Natural killer cell (primary cell): ENCODE measurements at regions of chr11 and their contacts with region 1.

Region 1: GRCh38 chr11:59753650-59754493 is 1.3 kb upstream of the STX3 start:
- DNase-seq: peak; percentile 82 to 90
- ATAC-seq: peak; percentile 67 to 83 (median 75)
- H3K4me3 ChIP-seq: peak overlapping the region; percentile 74
- H3K4me3 Mint-ChIP-seq: peak overlapping the region; percentile 96
- H3K27ac ChIP-seq: no peak overlapping the region
- H3K27ac Mint-ChIP-seq: peak overlapping the region; percentile 80 to 84
- H3K4me1 ChIP-seq: peaks cover 27% of the 10 kb centered on the region
- H3K4me1 Mint-ChIP-seq: peaks cover 41 to 47% of the 10 kb centered on the region in 2 donors
- H3K27me3 ChIP-seq: no peaks in the 10 kb centered on the region
- H3K27me3 Mint-ChIP-seq: peaks cover 6 to 9% of the 10 kb centered on the region in 2 donors
- CTCF ChIP-seq: peak; percentile 84

Region 2: GRCh38 chr11:59728913-59729312 is 25.0 kb before region 1 on chr11:
- intact Hi-C with region 1: no loop called
- DNase-seq: peak; percentile 23 to 43
- ATAC-seq: peak; percentile 93 to 99 (median 93)
- H3K4me3 ChIP-seq: no peak overlapping the region
- H3K4me3 Mint-ChIP-seq: no peak overlapping the region
- H3K27ac ChIP-seq: peak overlapping the region; percentile 61
- H3K27ac Mint-ChIP-seq: peak overlapping the region; percentile 84 to 86
- H3K4me1 ChIP-seq: peaks cover 9% of the 10 kb centered on the region
- H3K4me1 Mint-ChIP-seq: peaks cover 18% of the 10 kb centered on the region in 2 donors
- H3K27me3 ChIP-seq: no peaks in the 10 kb centered on the region
- H3K27me3 Mint-ChIP-seq: peaks cover 0 to 3% of the 10 kb centered on the region in 2 donors
- CTCF ChIP-seq: no peak

Region 3: GRCh38 chr11:59802639-59803176 is 48.8 kb after region 1 on chr11:
- intact Hi-C with region 1: loop called (anchors 1 kb)
- DNase-seq: peak in 1 of 2 donors; percentile 83
- ATAC-seq: peak in 2 of 3 donors; percentile 83 to 86
- H3K4me3 ChIP-seq: no peak overlapping the region
- H3K4me3 Mint-ChIP-seq: no peak overlapping the region
- H3K27ac ChIP-seq: no peak overlapping the region
- H3K27ac Mint-ChIP-seq: no peak overlapping the region
- H3K4me1 ChIP-seq: no peaks in the 10 kb centered on the region
- H3K4me1 Mint-ChIP-seq: peaks cover 0 to 12% of the 10 kb centered on the region in 2 donors
- H3K27me3 ChIP-seq: no peaks in the 10 kb centered on the region
- H3K27me3 Mint-ChIP-seq: no peaks in the 10 kb centered on the region
- CTCF ChIP-seq: peak; percentile 61

Region 4: GRCh38 chr11:59810189-59810910 is 56.5 kb after region 1 on chr11 and contains the start of gene MRPL16:
- intact Hi-C with region 1: loop called (anchors 2 kb)
- DNase-seq: peak; percentile 79 to 95
- ATAC-seq: peak; percentile 97 to 99 (median 98)
- H3K4me3 ChIP-seq: peak within 1 kb of the TSS; percentile 59
- H3K4me3 Mint-ChIP-seq: peak within 1 kb of the TSS; percentile 91
- H3K27ac ChIP-seq: peak within 1 kb of the TSS; percentile 69
- H3K27ac Mint-ChIP-seq: peak within 1 kb of the TSS; percentile 81 to 90
- H3K4me1 ChIP-seq: peaks cover 13% of the 10 kb centered on the region
- H3K4me1 Mint-ChIP-seq: peaks cover 12 to 24% of the 10 kb centered on the region in 2 donors
- H3K27me3 ChIP-seq: no peaks in the 10 kb centered on the region
- H3K27me3 Mint-ChIP-seq: peaks cover 0 to 2% of the 10 kb centered on the region in 2 donors
- CTCF ChIP-seq: no peak
- total RNA-seq, gene MRPL16: 34.9 to 38.0 (median 37.5) TPM

Region 5: GRCh38 chr11:60193687-60194433 is 440.0 kb after region 1 on chr11:
- intact Hi-C with region 1: loop called (anchors 5 kb)
- DNase-seq: peak; percentile 40 to 68
- ATAC-seq: peak; percentile 66 to 76 (median 73)
- H3K4me3 ChIP-seq: no peak overlapping the region
- H3K4me3 Mint-ChIP-seq: no peak overlapping the region
- H3K27ac ChIP-seq: no peak overlapping the region
- H3K27ac Mint-ChIP-seq: no peak overlapping the region
- H3K4me1 ChIP-seq: no peaks in the 10 kb centered on the region
- H3K4me1 Mint-ChIP-seq: peaks cover 0 to 4% of the 10 kb centered on the region in 2 donors
- H3K27me3 ChIP-seq: peaks cover 2% of the 10 kb centered on the region
- H3K27me3 Mint-ChIP-seq: peaks cover 14 to 16% of the 10 kb centered on the region in 2 donors
- CTCF ChIP-seq: peak; percentile 89